IMR-90 (cell line): ENCODE measurements at regions of chr4 and their contacts with region 1.

Region 1: GRCh38 chr4:37568481-37568880 is 117.7 kb downstream of the RELL1 start:
- DNase-seq: no peak
- ATAC-seq: no peak
- H3K4me3 ChIP-seq: no peak overlapping the region
- H3K27ac ChIP-seq: no peak overlapping the region
- H3K4me1 ChIP-seq: 0 out of 2 replicates have a peak, but pooled peaks cover 2% of the 10 kb centered on the region
- H3K27me3 ChIP-seq: no peaks in the 10 kb centered on the region; the same call in 1 of the 2 replicates
- CTCF ChIP-seq: no peak
- POLR2A ChIP-seq: no peak
- RAD21 ChIP-seq: no peak

Region 2: GRCh38 chr4:37555322-37555721 is 13.2 kb before region 1 on chr4:
- CTCF ChIA-PET with region 1: no interaction called
- POLR2A ChIA-PET with region 1: interaction called, 14 read pairs
- dilution Hi-C with region 1: no loop called
- in situ Hi-C with region 1: no loop called
- intact Hi-C with region 1: no loop called
- DNase-seq: peak; percentile 2
- ATAC-seq: no peak
- H3K4me3 ChIP-seq: no peak overlapping the region
- H3K27ac ChIP-seq: no peak overlapping the region
- H3K4me1 ChIP-seq: no peaks in the 10 kb centered on the region
- H3K27me3 ChIP-seq: no peaks in the 10 kb centered on the region
- CTCF ChIP-seq: no peak
- POLR2A ChIP-seq: no peak
- RAD21 ChIP-seq: no peak